MCF 10A (cell line): ENCODE measurements at regions of chr12 and their contacts with region 1.

Region 1: GRCh38 chr12:96061864-96062453 is 26.6 kb upstream of the LTA4H start:
- DNase-seq: peak; percentile 87
- H3K4me3 Mint-ChIP-seq: no peak overlapping the region
- H3K27ac Mint-ChIP-seq: no peak overlapping the region
- H3K4me1 Mint-ChIP-seq: peaks cover 5% of the 10 kb centered on the region
- H3K27me3 Mint-ChIP-seq: no peaks in the 10 kb centered on the region
- CTCF ChIP-seq: peak; percentile 82

Region 2: GRCh38 chr12:96132819-96133218 is 70.9 kb after region 1 on chr12:
- CTCF ChIA-PET with region 1: interaction called, 3 read pairs
- POLR2A ChIA-PET with region 1: no interaction called
- intact Hi-C with region 1: loop called (anchors 1 kb)
- DNase-seq: peak; percentile 42
- H3K4me3 Mint-ChIP-seq: no peak overlapping the region
- H3K27ac Mint-ChIP-seq: no peak overlapping the region
- H3K4me1 Mint-ChIP-seq: peaks cover 7% of the 10 kb centered on the region
- H3K27me3 Mint-ChIP-seq: peaks cover 16% of the 10 kb centered on the region
- CTCF ChIP-seq: no peak

Region 3: DNA sequence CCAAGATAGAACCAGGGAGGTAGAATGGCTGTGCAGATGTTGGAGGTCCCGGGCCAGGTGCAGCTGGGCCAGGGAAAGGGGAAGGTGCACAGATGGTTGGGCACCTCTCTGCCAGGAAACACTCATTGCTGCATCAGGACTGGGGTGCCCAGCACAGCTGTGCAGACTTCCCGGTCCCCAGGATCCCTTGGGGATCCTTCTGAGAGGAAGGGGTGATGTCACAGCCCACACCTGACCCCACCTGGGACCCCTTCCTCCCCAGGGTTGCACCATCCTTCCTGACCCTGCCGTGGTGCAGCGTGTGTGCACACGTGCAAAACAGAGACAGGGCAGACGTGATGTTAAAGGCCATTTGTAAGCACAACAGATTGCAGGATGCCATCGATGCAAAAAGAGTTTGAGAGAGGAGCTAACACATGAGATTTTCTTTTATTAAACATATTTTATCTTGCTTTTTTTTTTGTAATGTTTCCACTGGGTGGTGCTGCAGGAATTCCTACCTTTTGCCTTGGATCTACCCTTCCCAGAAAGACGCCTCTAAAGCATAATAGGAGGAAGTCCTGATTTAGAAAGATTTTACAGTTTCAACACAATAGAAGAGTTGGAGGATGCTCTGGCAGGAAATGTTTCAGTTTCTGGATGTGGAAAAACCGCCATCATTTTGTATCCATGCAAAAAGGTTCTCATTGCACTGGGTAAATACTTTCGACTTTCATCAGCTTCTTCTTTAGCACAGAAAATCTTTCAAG is 147.0 kb after region 1 on chr12:
- CTCF ChIA-PET with region 1: interaction called, 190 read pairs
- POLR2A ChIA-PET with region 1: interaction called, 3 read pairs
- intact Hi-C with region 1: no loop called
- DNase-seq: no peak
- H3K4me3 Mint-ChIP-seq: no peak overlapping the region
- H3K27ac Mint-ChIP-seq: peak overlapping the region; percentile 78
- H3K4me1 Mint-ChIP-seq: peaks cover 42% of the 10 kb centered on the region
- H3K27me3 Mint-ChIP-seq: no peaks in the 10 kb centered on the region
- CTCF ChIP-seq: peak; percentile 14

Region 4: GRCh38 chr12:96326628-96327227 is 264.8 kb after region 1 on chr12:
- CTCF ChIA-PET with region 1: no interaction called
- POLR2A ChIA-PET with region 1: no interaction called
- intact Hi-C with region 1: no loop called
- DNase-seq: no peak
- H3K4me3 Mint-ChIP-seq: no peak overlapping the region
- H3K27ac Mint-ChIP-seq: no peak overlapping the region
- H3K4me1 Mint-ChIP-seq: peaks cover 13% of the 10 kb centered on the region
- H3K27me3 Mint-ChIP-seq: no peaks in the 10 kb centered on the region
- CTCF ChIP-seq: no peak